ENCODE measurements at regions of chr11 and their contacts with region 1.

Region 1: DNA sequence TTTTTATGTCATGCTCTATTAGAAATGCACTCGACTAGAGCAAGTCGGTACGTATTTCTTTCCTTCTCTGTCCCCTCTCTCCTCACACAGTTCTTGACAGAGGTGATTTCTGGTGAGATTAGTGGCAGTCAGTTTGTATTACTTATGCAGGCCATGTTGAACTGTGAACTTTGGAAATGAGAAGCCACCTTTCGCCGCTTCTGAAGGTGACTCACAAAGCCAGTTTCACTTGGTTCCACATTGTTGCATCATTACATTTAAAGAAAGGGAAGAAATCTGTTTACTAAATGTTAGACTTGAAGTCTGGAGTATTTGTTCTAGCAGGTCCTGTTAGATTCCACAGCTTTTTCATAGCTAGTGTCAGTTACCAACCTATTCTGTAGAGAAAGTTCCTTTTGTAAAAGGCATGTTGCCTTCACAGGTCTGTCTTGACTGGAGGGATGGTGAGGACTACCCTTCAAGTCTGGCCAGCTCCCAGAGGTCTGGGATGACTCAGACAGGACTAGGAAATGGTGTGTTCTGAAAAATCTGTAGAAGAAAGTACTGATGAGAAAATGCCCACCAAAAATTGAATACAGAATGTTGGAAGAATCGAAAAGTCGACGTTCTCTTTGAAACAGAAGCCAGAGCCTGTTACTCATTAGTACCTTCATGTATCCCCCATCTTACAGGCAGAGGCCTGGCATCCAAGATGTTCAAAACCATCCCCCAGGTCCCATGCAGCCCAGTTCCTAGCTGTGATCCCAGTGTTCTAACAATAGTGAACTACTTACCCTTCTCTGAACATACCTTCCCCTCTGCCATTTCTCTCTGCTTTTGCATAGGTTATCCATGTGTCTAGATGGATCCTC is 181.4 kb downstream of the DBX1 start:
- DNase-seq: peak; percentile 85
- H3K4me3 ChIP-seq: no peak overlapping the region
- H3K27ac ChIP-seq: peak overlapping the region; percentile 80
- H3K4me1 ChIP-seq: peaks cover 26% of the 10 kb centered on the region
- H3K27me3 ChIP-seq: no peaks in the 10 kb centered on the region
- CTCF ChIP-seq: no peak

Region 2: DNA sequence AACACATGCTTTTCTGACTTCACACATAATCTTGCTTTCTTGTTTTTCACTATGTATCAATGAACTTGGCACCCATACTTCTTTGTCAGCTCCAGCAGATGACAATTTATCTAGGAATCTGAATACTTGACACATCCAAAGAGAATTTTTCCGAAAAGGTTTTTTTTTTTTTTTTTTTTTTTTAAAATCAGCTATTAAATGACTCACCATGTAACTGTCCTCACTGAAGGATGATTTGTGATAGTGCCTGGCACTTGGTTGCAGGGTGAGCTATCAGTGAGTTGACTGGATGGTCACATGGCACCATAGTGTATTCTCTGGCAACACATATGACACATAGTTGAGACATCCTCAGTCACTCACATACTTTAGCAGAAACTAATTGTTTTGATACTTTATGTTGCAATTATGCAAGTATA is 604.7 kb before region 1 on chr11:
- CTCF ChIA-PET with region 1: interaction called, 10 read pairs
- dilution Hi-C with region 1: no loop called
- in situ Hi-C with region 1: no loop called
- intact Hi-C with region 1: no loop called
- DNase-seq: peak; percentile 93
- H3K4me3 ChIP-seq: no peak overlapping the region
- H3K27ac ChIP-seq: peak overlapping the region; percentile 64
- H3K4me1 ChIP-seq: peaks cover 40% of the 10 kb centered on the region
- H3K27me3 ChIP-seq: no peaks in the 10 kb centered on the region
- CTCF ChIP-seq: no peak

Region 3: DNA sequence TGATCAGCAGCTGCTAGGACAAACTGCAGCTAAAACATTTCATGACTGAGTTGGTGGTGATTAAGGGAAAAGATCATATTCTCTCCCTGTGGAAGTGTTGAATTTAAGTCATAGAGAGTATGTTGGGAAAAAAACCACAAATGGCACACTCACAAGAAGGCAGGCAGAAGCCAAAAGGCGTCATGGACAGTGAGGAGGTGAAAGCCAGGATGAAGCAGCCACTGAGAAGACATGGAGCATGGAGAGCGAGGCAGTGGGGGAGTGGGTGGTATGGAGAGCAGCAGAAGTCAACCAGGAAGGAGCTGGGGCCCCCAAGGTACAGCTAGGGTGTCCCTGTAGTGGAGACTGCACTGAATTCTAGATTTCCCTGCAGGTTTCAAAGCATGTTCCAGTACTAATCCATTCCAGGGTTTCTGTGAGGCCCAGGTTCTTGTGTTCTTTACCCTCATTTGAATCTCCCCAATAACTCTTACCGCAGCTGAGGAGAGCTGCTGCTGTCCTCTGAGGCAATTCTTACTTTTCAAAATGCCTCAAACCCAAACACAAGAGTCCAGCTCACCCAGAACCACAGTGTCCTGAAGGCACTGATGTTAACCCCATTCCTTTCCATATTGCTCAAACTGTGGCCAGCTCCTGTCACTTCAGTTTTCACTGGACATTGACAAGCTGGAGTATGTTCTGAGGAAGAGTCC is 546.4 kb before region 1 on chr11:
- CTCF ChIA-PET with region 1: no interaction called
- dilution Hi-C with region 1: no loop called
- in situ Hi-C with region 1: no loop called
- intact Hi-C with region 1: no loop called
- DNase-seq: peak; percentile 81
- H3K4me3 ChIP-seq: no peak overlapping the region
- H3K27ac ChIP-seq: no peak overlapping the region
- H3K4me1 ChIP-seq: peaks cover 6% of the 10 kb centered on the region
- H3K27me3 ChIP-seq: no peaks in the 10 kb centered on the region
- CTCF ChIP-seq: no peak

Region 4: GRCh38 chr11:19628018-19628417 is 350.9 kb before region 1 on chr11:
- CTCF ChIA-PET with region 1: no interaction called
- dilution Hi-C with region 1: no loop called
- in situ Hi-C with region 1: no loop called
- intact Hi-C with region 1: no loop called
- DNase-seq: peak; percentile 68
- H3K4me3 ChIP-seq: no peak overlapping the region
- H3K27ac ChIP-seq: peak overlapping the region; percentile 67
- H3K4me1 ChIP-seq: peaks cover 35% of the 10 kb centered on the region
- H3K27me3 ChIP-seq: no peaks in the 10 kb centered on the region
- CTCF ChIP-seq: peak in 1 of 2 donors; percentile 1

Region 5: GRCh38 chr11:19957294-19957943 is 21.5 kb before region 1 on chr11:
- CTCF ChIA-PET with region 1: no interaction called
- dilution Hi-C with region 1: no loop called
- in situ Hi-C with region 1: no loop called
- intact Hi-C with region 1: loop called (anchors 2 kb)
- DNase-seq: peak; percentile 32
- H3K4me3 ChIP-seq: no peak overlapping the region
- H3K27ac ChIP-seq: no peak overlapping the region
- H3K4me1 ChIP-seq: peaks cover 29% of the 10 kb centered on the region
- H3K27me3 ChIP-seq: no peaks in the 10 kb centered on the region
- CTCF ChIP-seq: no peak

Region 6: DNA sequence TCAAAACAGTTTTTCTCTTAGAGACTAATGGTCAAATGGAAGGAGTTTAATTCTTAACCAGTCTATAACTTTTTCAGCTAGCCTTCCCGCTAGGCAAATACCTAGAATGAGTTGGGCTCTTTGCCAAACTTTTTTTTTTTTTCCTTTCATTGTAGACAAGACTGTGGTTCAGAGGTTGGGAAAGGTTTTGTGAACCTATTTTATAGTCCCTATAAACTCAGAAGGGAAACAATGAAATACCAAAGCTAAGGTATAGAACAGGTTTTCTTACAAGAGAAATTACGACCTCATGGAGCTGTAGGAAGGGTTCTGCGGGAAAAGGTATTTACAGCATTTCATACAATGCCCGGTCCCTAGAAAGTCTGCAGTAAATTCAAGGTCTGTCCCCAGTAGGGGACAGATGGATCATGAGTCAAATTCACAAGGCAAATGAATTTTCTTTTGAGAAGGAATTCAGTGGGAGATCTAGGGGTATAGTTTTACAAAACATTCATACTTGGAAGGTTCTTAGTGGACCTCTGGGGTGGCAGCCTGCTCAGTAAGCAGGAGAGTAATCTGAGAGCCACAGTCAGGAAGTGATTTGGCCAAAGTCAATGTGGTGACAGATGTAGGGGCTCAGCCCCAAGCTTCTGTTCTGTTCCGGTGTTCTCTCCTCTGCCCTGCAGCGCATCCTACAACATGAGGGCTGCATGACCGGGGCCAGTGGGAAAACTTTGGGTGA is 34.6 kb after region 1 on chr11:
- CTCF ChIA-PET with region 1: no interaction called
- dilution Hi-C with region 1: no loop called
- in situ Hi-C with region 1: no loop called
- intact Hi-C with region 1: loop called (anchors 2 kb)
- DNase-seq: peak; percentile 56
- H3K4me3 ChIP-seq: no peak overlapping the region
- H3K27ac ChIP-seq: no peak overlapping the region
- H3K4me1 ChIP-seq: peaks cover 41% of the 10 kb centered on the region
- H3K27me3 ChIP-seq: no peaks in the 10 kb centered on the region
- CTCF ChIP-seq: no peak

Region 7: DNA sequence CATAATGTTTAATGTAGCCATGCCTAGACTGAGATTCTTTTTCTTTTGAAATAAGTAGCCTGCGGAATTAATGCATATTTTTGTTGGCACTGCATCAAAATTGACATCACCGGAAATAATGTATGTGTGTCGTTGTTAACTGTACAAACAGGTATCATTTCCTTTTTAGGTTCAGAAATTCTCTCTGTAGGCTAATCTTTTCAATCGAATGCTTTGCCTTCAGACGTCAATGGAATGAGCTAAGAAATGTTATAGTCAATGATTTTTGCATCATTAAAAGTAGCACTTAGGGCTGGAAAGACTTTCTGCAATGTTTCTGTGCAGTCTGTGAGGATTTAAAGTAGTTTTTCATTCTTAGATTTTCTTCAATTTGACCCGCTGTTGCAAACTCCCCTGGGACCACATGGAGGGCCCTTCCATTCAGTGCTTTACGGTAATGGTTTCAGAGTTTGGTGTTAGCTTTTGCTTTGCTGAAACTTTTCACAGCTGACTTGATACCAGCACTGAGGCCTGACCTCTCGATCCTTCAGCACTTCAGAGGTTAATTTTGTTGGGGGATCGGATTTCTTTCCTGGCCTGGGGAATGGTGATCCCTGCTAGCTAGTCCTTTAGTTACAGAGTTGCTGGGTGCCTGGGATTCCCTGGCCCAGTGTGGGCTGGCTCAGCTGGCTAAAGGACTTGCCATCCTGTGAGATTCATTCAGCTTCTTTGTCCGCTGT is 43.6 kb after region 1 on chr11:
- CTCF ChIA-PET with region 1: no interaction called
- dilution Hi-C with region 1: no loop called
- in situ Hi-C with region 1: no loop called
- intact Hi-C with region 1: loop called (anchors 2 kb)
- DNase-seq: peak; percentile 67
- H3K4me3 ChIP-seq: peak overlapping the region; percentile 43 to 64 (median 58)
- H3K27ac ChIP-seq: peak overlapping the region; percentile 26
- H3K4me1 ChIP-seq: peaks cover 48% of the 10 kb centered on the region
- H3K27me3 ChIP-seq: no peaks in the 10 kb centered on the region
- CTCF ChIP-seq: no peak

Region 8: GRCh38 chr11:20374746-20375300 is 395.9 kb after region 1 on chr11:
- CTCF ChIA-PET with region 1: no interaction called
- dilution Hi-C with region 1: no loop called
- in situ Hi-C with region 1: no loop called
- intact Hi-C with region 1: no loop called
- DNase-seq: peak; percentile 47
- H3K4me3 ChIP-seq: no peak overlapping the region
- H3K27ac ChIP-seq: no peak overlapping the region
- H3K4me1 ChIP-seq: peaks cover 3% of the 10 kb centered on the region
- H3K27me3 ChIP-seq: no peaks in the 10 kb centered on the region
- CTCF ChIP-seq: no peak

Measured in mammary epithelial cell (primary cell).